HCT116 (cell line): ENCODE measurements at regions of chr6 and their contacts with region 1.

Region 1: DNA sequence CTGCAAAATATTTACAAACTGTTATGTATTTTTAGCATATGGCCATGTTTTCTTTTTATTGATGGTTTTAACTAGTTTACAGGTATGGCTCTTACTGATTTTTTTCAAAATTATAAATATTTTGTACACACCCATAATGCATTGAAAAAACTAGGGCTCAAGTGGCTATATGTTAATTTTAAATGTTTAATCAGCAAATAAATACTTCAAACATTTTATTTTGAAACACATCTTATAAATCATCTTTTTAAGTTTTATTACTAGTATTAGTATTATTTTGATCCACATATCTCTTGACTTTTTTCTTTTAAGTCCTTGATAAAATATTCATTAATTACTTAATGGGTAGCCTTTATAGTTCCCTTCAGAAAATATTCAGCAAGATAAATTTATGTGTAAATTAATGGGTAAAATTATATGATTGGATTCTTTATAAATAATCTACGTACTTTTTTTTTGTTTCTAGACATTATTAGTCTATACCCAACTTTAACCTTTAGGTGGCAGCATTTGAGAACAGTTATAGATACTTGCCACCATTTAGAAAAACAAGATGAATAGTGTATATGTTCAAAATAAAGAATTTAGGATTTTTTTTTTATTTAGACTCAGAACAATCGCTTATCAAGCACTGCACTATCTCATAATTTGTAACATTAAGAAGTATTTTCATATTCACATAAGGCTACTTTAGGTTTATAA is 241.9 kb downstream of the ADGRB3 start:
- DNase-seq: no peak
- ATAC-seq: no peak
- H3K4me3 ChIP-seq: no peak overlapping the region
- H3K27ac ChIP-seq: no peak overlapping the region
- H3K4me1 ChIP-seq: no peaks in the 10 kb centered on the region
- H3K27me3 ChIP-seq: no peaks in the 10 kb centered on the region
- CTCF ChIP-seq: peak in 1 of 3 experiments; percentile 28; a peak in 1 of 6 replicates
- POLR2A ChIP-seq: no peak
- RAD21 ChIP-seq: no peak

Region 2: GRCh38 chr6:68967549-68968300 is 90.8 kb after region 1 on chr6:
- CTCF ChIA-PET with region 1: no interaction called
- POLR2A ChIA-PET with region 1: no interaction called
- RAD21 ChIA-PET with region 1: no interaction called
- intact Hi-C with region 1: no loop called
- DNase-seq: peak; percentile 7
- ATAC-seq: 0 out of 2 replicates have a peak, but pooled peaks have one; percentile 42
- H3K4me3 ChIP-seq: no peak overlapping the region
- H3K27ac ChIP-seq: no peak overlapping the region
- H3K4me1 ChIP-seq: no peaks in the 10 kb centered on the region
- H3K27me3 ChIP-seq: no peaks in the 10 kb centered on the region
- CTCF ChIP-seq: peak in 2 of 3 experiments; percentile 68 to 71; a peak in 4 of 6 replicates
- POLR2A ChIP-seq: no peak
- RAD21 ChIP-seq: peak; percentile 37; the same call in 1 of the 2 replicates

Region 3: DNA sequence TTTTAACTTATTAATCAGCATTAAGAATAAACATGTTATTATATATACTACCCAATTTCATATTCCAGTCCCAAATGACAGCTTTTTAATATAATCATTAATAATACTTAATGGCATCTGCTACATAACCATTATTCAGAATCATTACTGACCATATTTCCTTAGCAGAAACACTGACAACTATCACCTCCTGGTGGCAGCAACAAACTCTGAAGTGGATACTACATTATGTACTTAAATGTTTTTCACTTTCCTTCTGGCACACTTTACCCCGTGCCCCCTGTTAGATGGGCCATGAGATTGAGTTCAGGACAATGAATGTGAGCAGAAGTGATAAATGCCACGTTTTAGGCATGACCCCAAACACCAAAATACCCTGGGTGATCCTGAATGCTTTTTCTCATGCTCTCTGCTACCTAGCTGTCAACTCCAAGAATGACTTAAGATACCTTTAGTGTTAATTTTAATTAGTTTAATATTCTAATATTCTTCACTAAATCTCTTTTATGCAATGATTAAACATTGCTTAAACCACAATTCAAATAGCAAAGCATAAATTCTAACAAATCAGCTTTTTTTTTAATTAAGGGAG is 842.8 kb after region 1 on chr6:
- CTCF ChIA-PET with region 1: no interaction called
- POLR2A ChIA-PET with region 1: no interaction called
- RAD21 ChIA-PET with region 1: no interaction called
- intact Hi-C with region 1: loop called (anchors 10 kb)
- DNase-seq: peak; percentile 2
- ATAC-seq: peak; percentile 69
- H3K4me3 ChIP-seq: no peak overlapping the region
- H3K27ac ChIP-seq: no peak overlapping the region
- H3K4me1 ChIP-seq: no peaks in the 10 kb centered on the region
- H3K27me3 ChIP-seq: no peaks in the 10 kb centered on the region
- CTCF ChIP-seq: peak; percentile 19 to 53 (median 41); a peak in 4 of 6 replicates
- POLR2A ChIP-seq: no peak
- RAD21 ChIP-seq: peak; percentile 40